ENCODE measurements at regions of chr11 and their contacts with region 1.

Region 1: GRCh38 chr11:74449369-74449931 is 17.9 kb downstream of the KCNE3 start:
- DNase-seq: peak; percentile 65 to 88 (median 84)
- H3K4me3 ChIP-seq: peak overlapping the region in 2 of 3 experiments; percentile 25 to 51
- H3K4me3 Mint-ChIP-seq: peak overlapping the region in 1 of 2 donors; percentile 87
- H3K27ac ChIP-seq: peak overlapping the region in 1 of 2 donors; percentile 57
- H3K27ac Mint-ChIP-seq: peak overlapping the region; percentile 38 to 91 (median 82)
- H3K4me1 ChIP-seq: peaks cover 13 to 18% of the 10 kb centered on the region in 2 donors
- H3K4me1 Mint-ChIP-seq: peaks cover 32% of the 10 kb centered on the region
- H3K27me3 ChIP-seq: no peaks in the 10 kb centered on the region
- H3K27me3 Mint-ChIP-seq: peaks cover 1 to 4% (median 4%) of the 10 kb centered on the region in 3 donors
- CTCF ChIP-seq: peak; percentile 85

Region 2: DNA sequence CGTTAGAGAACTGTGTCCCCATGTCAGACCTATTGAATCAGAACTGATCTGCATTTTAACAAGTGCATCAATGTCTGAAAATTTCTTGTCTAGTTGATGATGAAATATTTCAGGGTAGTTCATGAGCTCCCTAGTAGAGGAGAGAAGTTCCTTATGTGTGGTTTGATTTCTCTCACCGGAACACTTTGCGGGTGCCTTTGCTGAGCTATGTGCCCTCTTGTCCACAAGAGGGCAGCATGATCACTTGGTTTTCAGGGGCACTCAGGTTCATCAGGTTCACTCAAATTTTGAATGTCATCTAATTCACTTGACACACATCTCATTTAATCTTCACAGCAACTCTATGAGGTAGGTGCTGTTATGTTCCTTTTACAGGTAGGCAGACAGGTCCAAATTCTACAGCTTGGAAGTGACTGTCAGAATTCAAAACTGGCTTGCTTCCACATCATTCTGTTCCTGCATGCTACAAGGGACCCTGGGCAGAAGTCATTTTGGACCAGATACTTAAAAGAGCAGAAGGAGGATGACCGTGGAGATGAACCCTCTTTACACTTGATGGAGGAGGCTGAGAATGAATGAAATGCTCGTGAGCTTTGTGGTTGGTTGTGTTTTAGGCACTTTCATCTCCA is 193.6 kb before region 1 on chr11:
- intact Hi-C with region 1: loop called in 1 of 2 experiments (anchors 10 kb)
- DNase-seq: peak; percentile 49 to 63 (median 60)
- H3K4me3 ChIP-seq: no peak overlapping the region
- H3K4me3 Mint-ChIP-seq: no peak overlapping the region
- H3K27ac ChIP-seq: no peak overlapping the region
- H3K27ac Mint-ChIP-seq: no peak overlapping the region
- H3K4me1 ChIP-seq: no peaks in the 10 kb centered on the region
- H3K4me1 Mint-ChIP-seq: peaks cover 5% of the 10 kb centered on the region
- H3K27me3 ChIP-seq: no peaks in the 10 kb centered on the region
- H3K27me3 Mint-ChIP-seq: peaks cover 0 to 1% (median 0%) of the 10 kb centered on the region in 3 donors
- CTCF ChIP-seq: peak; percentile 91

Region 3: GRCh38 chr11:74388678-74389327 is 60.6 kb before region 1 on chr11:
- intact Hi-C with region 1: loop called in 1 of 2 experiments (anchors 1 kb)
- DNase-seq: peak; percentile 33 to 74 (median 57)
- H3K4me3 ChIP-seq: no peak overlapping the region
- H3K4me3 Mint-ChIP-seq: no peak overlapping the region
- H3K27ac ChIP-seq: no peak overlapping the region
- H3K27ac Mint-ChIP-seq: peak overlapping the region in 1 of 7 donors; percentile 20
- H3K4me1 ChIP-seq: peaks cover 2 to 9% of the 10 kb centered on the region in 2 donors
- H3K4me1 Mint-ChIP-seq: peaks cover 14% of the 10 kb centered on the region
- H3K27me3 ChIP-seq: no peaks in the 10 kb centered on the region
- H3K27me3 Mint-ChIP-seq: no peaks in the 10 kb centered on the region
- CTCF ChIP-seq: peak; percentile 88

Region 4: DNA sequence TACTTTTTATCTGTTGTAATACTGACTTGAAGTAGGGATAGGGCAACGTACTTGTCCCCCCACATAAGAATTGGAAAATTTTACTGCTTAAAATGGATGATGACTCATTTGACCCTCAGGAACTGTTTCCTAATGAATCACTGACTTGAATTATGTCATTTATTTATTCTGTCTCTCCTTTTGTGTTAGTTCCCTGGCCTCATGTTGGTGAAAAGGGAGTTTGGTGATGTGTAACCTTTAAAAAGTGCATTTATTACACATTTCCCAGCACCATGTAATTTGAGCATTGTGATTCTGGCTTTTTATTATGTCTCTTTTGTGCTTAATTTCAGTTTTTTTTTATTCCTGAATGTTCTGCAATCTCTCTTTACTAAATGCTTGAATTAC is 30.9 kb before region 1 on chr11:
- intact Hi-C with region 1: no loop called
- DNase-seq: no peak
- H3K4me3 ChIP-seq: no peak overlapping the region
- H3K4me3 Mint-ChIP-seq: no peak overlapping the region
- H3K27ac ChIP-seq: no peak overlapping the region
- H3K27ac Mint-ChIP-seq: no peak overlapping the region
- H3K4me1 ChIP-seq: no peaks in the 10 kb centered on the region
- H3K4me1 Mint-ChIP-seq: no peaks in the 10 kb centered on the region
- H3K27me3 ChIP-seq: no peaks in the 10 kb centered on the region
- H3K27me3 Mint-ChIP-seq: peaks cover 0 to 3% (median 0%) of the 10 kb centered on the region in 3 donors
- CTCF ChIP-seq: no peak

Region 5: GRCh38 chr11:74466916-74467885 is 17.8 kb after region 1 on chr11 and contains the start of gene KCNE3:
- intact Hi-C with region 1: no loop called
- DNase-seq: no peak
- H3K4me3 ChIP-seq: peak within 1 kb of the TSS; percentile 54 to 84 (median 82)
- H3K4me3 Mint-ChIP-seq: peak within 1 kb of the TSS; percentile 86 to 93
- H3K27ac ChIP-seq: peak within 1 kb of the TSS; percentile 11 to 71
- H3K27ac Mint-ChIP-seq: peak within 1 kb of the TSS; percentile 50 to 87 (median 81)
- H3K4me1 ChIP-seq: peaks cover 74 to 83% of the 10 kb centered on the region in 2 donors
- H3K4me1 Mint-ChIP-seq: peaks cover 81% of the 10 kb centered on the region
- H3K27me3 ChIP-seq: no peaks in the 10 kb centered on the region
- H3K27me3 Mint-ChIP-seq: peaks cover 0 to 5% (median 3%) of the 10 kb centered on the region in 3 donors
- CTCF ChIP-seq: no peak
- polyA plus RNA-seq, gene KCNE3: 29.9 to 76.6 (median 41.0) TPM

Region 6: DNA sequence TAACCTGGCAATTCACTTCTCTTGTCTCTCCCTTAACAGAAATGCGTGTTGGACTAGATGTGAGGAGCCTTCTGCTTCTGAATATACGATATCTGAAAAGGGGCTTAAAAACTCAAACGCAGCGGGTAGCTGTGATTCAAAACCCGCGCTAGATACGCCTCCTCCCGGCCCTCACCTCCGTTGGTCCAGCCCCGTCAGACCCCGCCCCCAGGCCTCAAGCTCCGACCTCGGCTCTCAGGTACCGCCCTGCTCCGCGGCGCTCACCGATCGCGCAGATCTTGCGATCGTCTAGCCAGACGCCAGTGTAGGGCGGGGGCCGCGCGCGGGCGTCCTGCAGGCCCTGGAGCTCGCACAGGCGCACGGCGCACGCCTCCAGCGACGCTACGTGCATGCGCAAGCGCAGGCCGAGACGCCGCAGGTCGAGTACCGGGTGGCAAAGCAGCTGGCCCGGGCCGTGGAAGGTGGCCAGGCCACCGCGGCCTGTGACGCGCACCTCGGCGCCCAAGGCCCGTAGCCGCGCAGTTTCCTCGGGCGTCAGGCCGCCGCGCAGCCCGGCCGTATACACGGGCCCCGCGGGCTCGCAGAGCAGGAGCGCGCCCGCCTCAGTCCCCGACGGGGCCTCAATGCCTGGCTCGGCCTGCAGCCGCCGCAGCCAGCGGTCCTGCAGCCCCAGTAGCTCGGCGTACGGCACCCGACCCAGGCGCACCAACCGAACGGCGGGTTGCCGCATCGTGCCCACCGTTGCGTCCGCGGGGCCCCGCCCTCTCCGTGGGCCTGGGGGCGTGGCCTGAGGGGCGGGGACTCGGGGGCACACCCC is 43.7 kb after region 1 on chr11 and contains the start of gene LIPT2:
- intact Hi-C with region 1: loop called in 1 of 2 experiments (anchors 5 kb)
- DNase-seq: peak; percentile 91 to 94 (median 92)
- H3K4me3 ChIP-seq: peak within 1 kb of the TSS; percentile 47 to 91 (median 86)
- H3K4me3 Mint-ChIP-seq: peak within 1 kb of the TSS; percentile 71 to 80
- H3K27ac ChIP-seq: peak within 1 kb of the TSS; percentile 27 to 88
- H3K27ac Mint-ChIP-seq: peak within 1 kb of the TSS; percentile 76 to 93 (median 92)
- H3K4me1 ChIP-seq: peaks cover 16 to 25% of the 10 kb centered on the region in 2 donors
- H3K4me1 Mint-ChIP-seq: peaks cover 20% of the 10 kb centered on the region
- H3K27me3 ChIP-seq: no peaks in the 10 kb centered on the region
- H3K27me3 Mint-ChIP-seq: no peaks in the 10 kb centered on the region
- CTCF ChIP-seq: no peak
- polyA plus RNA-seq, gene LIPT2: 2.2 to 5.1 (median 4.4) TPM